Caco-2 (cell line): ENCODE measurements at regions of chr1 and their contacts with region 1.

Region 1: GRCh38 chr1:160078512-160079195 is 2.7 kb upstream of the KCNJ9 start:
- DNase-seq: peak; percentile 64 to 74
- H3K4me3 ChIP-seq: no peak overlapping the region
- H3K4me3 Mint-ChIP-seq: no peak overlapping the region
- H3K27ac Mint-ChIP-seq: no peak overlapping the region
- H3K4me1 ChIP-seq: no peaks in the 10 kb centered on the region
- H3K4me1 Mint-ChIP-seq: no peaks in the 10 kb centered on the region
- H3K27me3 ChIP-seq: no peaks in the 10 kb centered on the region
- H3K27me3 Mint-ChIP-seq: peaks cover 14% of the 10 kb centered on the region
- CTCF ChIP-seq: peak; percentile 74 to 87

Region 2: GRCh38 chr1:160031365-160032164 is 47.1 kb before region 1 on chr1 and contains the start of gene PIGM:
- CTCF ChIA-PET with region 1: interaction called, 5 read pairs
- POLR2A ChIA-PET with region 1: no interaction called
- intact Hi-C with region 1: loop called (anchors 5 kb)
- DNase-seq: peak; percentile 95 to 96
- H3K4me3 ChIP-seq: peak within 1 kb of the TSS; percentile 96
- H3K4me3 Mint-ChIP-seq: peak within 1 kb of the TSS; percentile 80
- H3K27ac Mint-ChIP-seq: peak within 1 kb of the TSS; percentile 71
- H3K4me1 ChIP-seq: peaks cover 6% of the 10 kb centered on the region
- H3K4me1 Mint-ChIP-seq: peaks cover 15% of the 10 kb centered on the region
- H3K27me3 ChIP-seq: no peaks in the 10 kb centered on the region
- H3K27me3 Mint-ChIP-seq: peaks cover 4% of the 10 kb centered on the region
- CTCF ChIP-seq: no peak
- total RNA-seq, gene PIGM: 5.5 and 5.7 TPM in 2 replicates

Region 3: DNA sequence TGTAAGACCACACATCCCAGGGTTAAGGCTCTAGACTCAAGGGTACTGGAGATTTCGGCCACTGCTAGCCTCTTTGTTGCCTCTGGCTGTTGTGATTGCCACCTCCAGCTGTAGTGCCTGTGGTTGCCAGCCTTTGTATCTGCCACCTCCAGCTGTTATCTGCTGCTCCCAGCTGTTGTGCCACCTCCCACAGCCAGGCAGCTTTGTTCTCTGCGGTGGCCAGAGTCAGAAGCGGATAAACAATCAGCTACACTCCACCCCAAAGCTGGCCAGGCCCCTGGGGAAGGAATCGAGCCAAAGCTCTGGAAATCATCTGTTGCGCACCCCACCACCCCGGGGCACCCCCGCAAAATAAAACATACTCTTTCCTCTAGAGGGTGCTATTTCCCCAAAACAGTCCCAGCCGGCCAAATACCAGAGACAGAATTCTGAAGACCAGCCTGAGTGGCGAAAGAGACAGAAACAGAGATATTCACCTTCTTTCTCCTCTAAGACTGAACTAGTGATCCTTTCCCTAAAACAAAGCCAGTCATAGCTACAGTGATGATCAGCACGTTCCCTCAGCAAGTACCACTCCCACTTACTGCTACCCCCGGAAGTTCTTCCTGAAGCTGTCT is 32.1 kb before region 1 on chr1:
- CTCF ChIA-PET with region 1: interaction called, 16 read pairs
- POLR2A ChIA-PET with region 1: no interaction called
- intact Hi-C with region 1: loop called (anchors 1 kb)
- DNase-seq: peak in 1 of 2 experiments; percentile 52
- H3K4me3 ChIP-seq: no peak overlapping the region
- H3K4me3 Mint-ChIP-seq: no peak overlapping the region
- H3K27ac Mint-ChIP-seq: no peak overlapping the region
- H3K4me1 ChIP-seq: no peaks in the 10 kb centered on the region
- H3K4me1 Mint-ChIP-seq: peaks cover 18% of the 10 kb centered on the region
- H3K27me3 ChIP-seq: no peaks in the 10 kb centered on the region
- H3K27me3 Mint-ChIP-seq: peaks cover 16% of the 10 kb centered on the region
- CTCF ChIP-seq: peak; percentile 57 to 62

Region 4: DNA sequence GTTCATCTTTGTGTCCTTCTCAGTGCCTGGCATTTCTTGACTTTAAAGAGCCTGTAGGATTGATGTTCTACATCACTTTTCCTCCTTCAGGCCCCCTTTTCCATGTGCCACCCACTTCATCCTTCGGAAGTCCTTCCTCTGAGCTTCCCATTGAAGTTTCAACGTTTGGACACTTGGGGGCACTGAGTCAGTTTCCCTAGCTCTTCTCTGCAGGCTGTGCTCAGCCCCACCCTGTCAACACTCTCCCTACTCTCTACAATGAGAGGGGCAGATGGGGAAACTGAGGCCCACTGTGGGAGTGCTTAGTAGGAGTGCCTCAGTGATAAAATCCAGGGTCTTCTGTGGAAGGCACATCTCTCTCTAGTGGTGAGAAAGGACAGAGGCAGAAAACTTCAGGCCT is 20.6 kb before region 1 on chr1:
- CTCF ChIA-PET with region 1: interaction called, 14 read pairs
- POLR2A ChIA-PET with region 1: no interaction called
- intact Hi-C with region 1: loop called (anchors 1 kb)
- DNase-seq: no peak
- H3K4me3 ChIP-seq: no peak overlapping the region
- H3K4me3 Mint-ChIP-seq: no peak overlapping the region
- H3K27ac Mint-ChIP-seq: no peak overlapping the region
- H3K4me1 ChIP-seq: peaks cover 9% of the 10 kb centered on the region
- H3K4me1 Mint-ChIP-seq: no peaks in the 10 kb centered on the region
- H3K27me3 ChIP-seq: no peaks in the 10 kb centered on the region
- H3K27me3 Mint-ChIP-seq: peaks cover 10% of the 10 kb centered on the region
- CTCF ChIP-seq: peak in 1 of 2 experiments; percentile 15

Region 5: DNA sequence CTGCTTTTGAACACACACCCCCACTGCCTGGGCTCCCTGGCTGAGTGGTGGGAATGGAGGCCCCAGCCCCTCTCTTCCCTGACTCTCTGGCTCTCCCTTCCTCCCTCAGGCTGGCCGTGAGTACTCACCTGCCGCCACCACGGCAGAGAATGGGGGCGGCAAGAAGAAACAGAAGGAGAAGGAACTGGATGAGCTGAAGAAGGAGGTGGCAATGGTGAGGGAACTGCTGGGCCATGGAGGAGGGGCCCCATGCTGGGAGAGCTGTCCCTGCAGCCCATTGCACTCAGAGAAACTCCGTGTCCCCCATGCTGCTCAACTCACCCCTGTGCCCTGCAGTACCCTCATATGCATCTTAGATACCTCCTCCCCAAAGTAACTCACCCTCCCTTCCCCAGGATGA is 42.1 kb after region 1 on chr1:
- CTCF ChIA-PET with region 1: no interaction called
- POLR2A ChIA-PET with region 1: no interaction called
- intact Hi-C with region 1: no loop called
- DNase-seq: no peak
- H3K4me3 ChIP-seq: no peak overlapping the region
- H3K4me3 Mint-ChIP-seq: no peak overlapping the region
- H3K27ac Mint-ChIP-seq: no peak overlapping the region
- H3K4me1 ChIP-seq: peaks cover 23% of the 10 kb centered on the region
- H3K4me1 Mint-ChIP-seq: peaks cover 11% of the 10 kb centered on the region
- H3K27me3 ChIP-seq: no peaks in the 10 kb centered on the region
- H3K27me3 Mint-ChIP-seq: no peaks in the 10 kb centered on the region
- CTCF ChIP-seq: no peak